Dorsolateral prefrontal cortex (tissue), 120 donors: ENCODE measurements at regions of chr14 and their contacts with region 1.

Region 1: GRCh38 chr14:45134051-45134958 is at the start of gene FKBP3:
- DNase-seq: peak; percentile 93 to 99 (median 98)
- H3K4me3 ChIP-seq: peak within 1 kb of the TSS; percentile 48 to 98 (median 87)
- H3K27ac ChIP-seq: peak within 1 kb of the TSS; percentile 67 to 99 (median 93)
- H3K27me3 ChIP-seq: no peaks in the 10 kb centered on the region
- CTCF ChIP-seq: peak in 42 of 56 donors; percentile 11 to 61 (median 38)
- total RNA-seq, gene FKBP3: 78.1 to 143 (median 109) TPM

Region 2: GRCh38 chr14:44897045-44897844 is 237.1 kb before region 1 on chr14:
- intact Hi-C with region 1: loop called (anchors 2 to 5 kb)
- DNase-seq: peak; percentile 92 to 100 (median 99)
- H3K4me3 ChIP-seq: peak overlapping the region; percentile 60 to 98 (median 89)
- H3K27ac ChIP-seq: peak overlapping the region; percentile 88 to 99 (median 96)
- H3K27me3 ChIP-seq: no peaks in the 10 kb centered on the region
- CTCF ChIP-seq: peak in 9 of 56 donors; percentile 1 to 35 (median 22)

Region 3: DNA sequence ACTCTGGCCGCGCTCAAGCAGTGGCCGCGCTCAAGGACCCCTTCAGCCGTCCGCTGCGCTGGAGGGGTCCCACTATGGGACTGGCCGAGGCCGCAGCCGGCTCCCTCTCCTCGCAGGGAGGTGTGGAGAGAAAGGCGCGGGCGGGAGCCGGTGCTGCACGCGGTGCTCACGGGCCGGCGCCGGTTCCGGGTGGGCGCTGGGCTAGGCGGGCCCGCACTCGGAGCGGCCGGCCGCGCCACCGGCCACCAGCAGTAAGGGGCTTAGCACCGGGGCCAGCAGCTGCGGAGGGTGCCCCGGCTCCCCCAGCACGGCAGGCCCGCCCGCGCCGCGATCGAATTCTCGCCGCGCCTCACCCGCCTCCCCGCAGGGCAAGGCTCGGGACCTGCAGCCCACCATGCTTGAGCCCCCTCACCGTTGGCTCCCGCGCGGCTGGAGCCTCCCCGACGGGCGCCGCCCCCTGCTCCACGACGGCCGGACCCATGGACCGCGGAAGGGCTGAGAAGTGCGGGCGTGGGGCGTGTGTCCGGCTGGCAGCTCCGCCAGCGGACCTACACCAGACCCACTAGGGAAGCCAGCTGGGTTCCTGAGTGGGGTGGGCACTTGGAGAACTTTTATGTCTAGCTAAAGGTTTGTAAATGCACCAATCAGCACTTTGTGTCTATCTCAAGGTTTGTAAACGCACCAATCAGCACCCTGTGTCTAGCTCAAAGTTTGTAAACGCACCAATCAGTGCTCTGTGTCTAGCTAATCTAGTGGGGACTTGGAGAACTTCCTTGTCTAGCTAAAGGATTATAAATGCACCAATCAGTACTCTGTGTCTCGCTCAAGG is 222.1 kb before region 1 on chr14:
- intact Hi-C with region 1: loop called in 1 of 2 experiments (anchors 2 kb)
- DNase-seq: no peak
- H3K4me3 ChIP-seq: peak overlapping the region; percentile 32 to 75 (median 57)
- H3K27ac ChIP-seq: no peak overlapping the region
- H3K27me3 ChIP-seq: peaks cover 0 to 15% (median 4%) of the 10 kb centered on the region in 45 donors
- CTCF ChIP-seq: no peak

Region 4: GRCh38 chr14:44961604-44962333 is 172.5 kb before region 1 on chr14 and contains the starts of genes KLHL28 and TOGARAM1:
- intact Hi-C with region 1: loop called (anchors 1 to 2 kb)
- DNase-seq: peak; percentile 96 to 100 (median 99)
- H3K4me3 ChIP-seq: peak within 1 kb of the TSS; percentile 56 to 98 (median 87)
- H3K27ac ChIP-seq: peak within 1 kb of the TSS; percentile 42 to 95 (median 87)
- H3K27me3 ChIP-seq: no peaks in the 10 kb centered on the region
- CTCF ChIP-seq: peak in 11 of 56 donors; percentile 5 to 40 (median 15)
- total RNA-seq, gene KLHL28: 15.5 to 37.2 (median 24.2) TPM
- total RNA-seq, gene TOGARAM1: 39.9 to 74.9 (median 59.1) TPM

Region 5: DNA sequence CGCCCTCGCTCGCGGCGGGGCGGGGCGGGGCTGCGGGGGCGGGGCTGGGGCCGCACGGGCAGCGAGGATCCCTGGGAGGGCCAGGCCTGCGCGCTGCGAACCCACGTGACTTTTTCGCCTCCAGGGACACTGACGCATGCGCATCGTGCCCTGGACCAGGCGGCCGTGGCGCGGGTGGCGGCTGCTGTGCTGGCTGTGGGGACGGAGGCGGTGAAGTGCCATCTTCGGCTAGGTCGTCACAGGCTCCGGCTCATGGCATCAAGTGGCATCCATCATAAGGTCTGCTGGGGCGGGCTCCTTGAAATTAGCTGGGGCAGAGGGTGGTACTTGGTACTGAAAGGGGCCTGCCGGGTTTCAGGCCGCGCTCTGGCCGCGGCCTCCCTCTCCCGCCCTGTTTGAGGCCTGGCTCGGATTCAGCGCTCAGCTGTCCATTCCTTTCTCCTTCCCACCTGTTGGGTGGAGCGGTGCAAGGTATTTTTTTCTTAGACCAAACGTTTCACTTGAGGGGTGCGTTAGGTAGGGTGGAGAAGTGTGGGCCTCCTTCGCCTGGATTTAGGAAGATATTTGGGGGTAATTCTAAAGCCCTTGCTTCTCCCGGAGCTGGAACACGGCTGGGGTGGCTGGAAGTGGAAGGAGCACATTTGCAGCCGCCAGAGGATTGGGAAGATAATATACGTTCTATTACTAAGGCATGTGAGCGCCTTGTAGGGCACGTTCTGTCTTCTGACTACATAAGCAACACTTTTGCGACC is 50.2 kb before region 1 on chr14 and contains the start of gene PRPF39:
- intact Hi-C with region 1: loop called (anchors 1 kb)
- DNase-seq: peak; percentile 86 to 97 (median 92)
- H3K4me3 ChIP-seq: peak within 1 kb of the TSS; percentile 60 to 98 (median 89)
- H3K27ac ChIP-seq: peak within 1 kb of the TSS in 56 of 59 donors; percentile 41 to 90 (median 80)
- H3K27me3 ChIP-seq: no peaks in the 10 kb centered on the region
- CTCF ChIP-seq: peak in 22 of 56 donors; percentile 8 to 43 (median 24)
- total RNA-seq, gene PRPF39: 39.6 to 77.7 (median 57.3) TPM

Region 6: DNA sequence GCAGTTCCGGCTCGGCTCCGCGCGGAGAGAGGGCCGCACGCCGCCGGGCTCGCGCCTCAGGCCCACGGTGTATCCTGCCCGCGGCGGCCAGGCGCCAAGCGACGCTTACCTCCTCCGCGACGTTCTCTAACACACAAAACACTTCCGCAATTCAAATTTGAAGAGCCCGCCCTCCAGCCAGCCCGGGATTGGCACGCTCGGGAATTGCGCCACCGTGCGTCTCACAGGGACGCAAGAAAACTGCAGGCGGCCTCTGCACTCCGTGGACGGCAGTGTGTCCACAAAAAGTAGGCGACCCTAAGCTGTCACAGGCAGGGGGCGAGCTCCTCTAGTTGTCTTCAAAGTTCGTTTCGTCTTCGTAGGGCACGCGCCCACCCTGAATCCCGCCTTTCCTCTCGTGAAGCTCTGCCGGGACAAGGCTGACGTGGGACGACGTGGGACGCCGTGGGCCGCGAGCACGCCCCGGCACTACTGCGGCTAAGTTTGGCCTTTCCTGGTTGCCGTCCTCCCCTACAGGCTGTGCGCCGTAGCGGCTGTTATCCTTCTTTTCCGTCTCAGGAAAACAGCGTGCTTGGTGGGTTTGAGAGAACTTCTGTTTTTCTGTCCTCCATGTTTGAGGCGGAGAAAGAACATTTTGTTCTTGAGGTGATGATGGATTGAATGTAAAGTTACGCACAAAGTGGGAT is 118.9 kb after region 1 on chr14 and contains the start of gene MIS18BP1:
- intact Hi-C with region 1: loop called (anchors 2 to 10 kb)
- DNase-seq: peak; percentile 64 to 92 (median 88)
- H3K4me3 ChIP-seq: peak within 1 kb of the TSS; percentile 56 to 98 (median 81)
- H3K27ac ChIP-seq: peak within 1 kb of the TSS; percentile 6 to 96 (median 85)
- H3K27me3 ChIP-seq: no peaks in the 10 kb centered on the region
- CTCF ChIP-seq: peak; percentile 45 to 87 (median 71)
- total RNA-seq, gene MIS18BP1: 5.1 to 26.8 (median 15.0) TPM